A673 (cell line): ENCODE measurements at regions of chr11 and their contacts with region 1.

Region 1: GRCh38 chr11:102495161-102496042 is 35.1 kb downstream of the MMP7 start:
- DNase-seq: peak; percentile 87
- H3K4me3 ChIP-seq: no peak overlapping the region
- H3K27ac ChIP-seq: no peak overlapping the region
- H3K4me1 ChIP-seq: no peaks in the 10 kb centered on the region
- H3K27me3 ChIP-seq: no peaks in the 10 kb centered on the region
- CTCF ChIP-seq: peak; percentile 81

Region 2: DNA sequence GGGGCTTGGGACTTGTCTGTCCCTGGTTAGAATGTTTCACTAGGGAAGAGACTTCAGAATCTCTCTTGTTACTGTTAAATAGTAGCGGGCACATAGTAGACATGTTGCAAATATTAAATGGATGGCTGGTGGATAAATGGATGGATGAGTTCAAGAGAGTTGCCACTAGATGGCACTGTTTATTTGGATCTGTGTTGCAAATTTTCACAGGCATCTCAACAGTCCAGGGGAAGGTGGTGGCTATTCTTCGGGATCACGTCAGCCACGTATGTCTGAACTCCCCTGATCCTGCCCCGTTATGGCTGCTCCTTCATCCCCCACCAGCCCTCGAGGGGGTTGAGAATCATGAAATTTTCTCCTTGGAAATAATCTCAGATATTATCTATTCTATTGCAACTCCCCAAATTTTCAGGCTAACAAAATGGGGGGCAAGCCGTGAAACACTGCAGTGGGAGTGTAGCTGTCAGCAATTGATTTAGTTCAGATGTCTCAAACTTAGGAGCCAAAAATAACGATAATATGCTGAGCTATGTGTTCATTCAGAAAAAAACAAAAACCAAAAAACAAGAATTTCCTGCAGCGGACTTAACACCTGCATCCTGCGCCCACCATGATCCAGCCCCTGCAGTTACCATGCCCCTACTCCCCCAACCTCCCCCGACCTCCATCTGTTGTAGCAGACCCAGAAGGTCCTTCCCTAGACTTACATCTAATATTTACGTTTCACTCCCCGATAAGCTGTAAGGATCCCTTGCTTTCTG is 207.3 kb before region 1 on chr11:
- CTCF ChIA-PET with region 1: no interaction called
- POLR2A ChIA-PET with region 1: no interaction called
- intact Hi-C with region 1: loop called (anchors 2 kb)
- DNase-seq: peak; percentile 89
- H3K4me3 ChIP-seq: peak overlapping the region; percentile 22
- H3K27ac ChIP-seq: no peak overlapping the region
- H3K4me1 ChIP-seq: peaks cover 19% of the 10 kb centered on the region
- H3K27me3 ChIP-seq: no peaks in the 10 kb centered on the region
- CTCF ChIP-seq: peak; percentile 90

Region 3: GRCh38 chr11:102367364-102367763 is 128.0 kb before region 1 on chr11:
- CTCF ChIA-PET with region 1: interaction called, 3 read pairs
- POLR2A ChIA-PET with region 1: no interaction called
- intact Hi-C with region 1: loop called (anchors 1 kb)
- DNase-seq: peak; percentile 55
- H3K4me3 ChIP-seq: no peak overlapping the region
- H3K27ac ChIP-seq: no peak overlapping the region
- H3K4me1 ChIP-seq: no peaks in the 10 kb centered on the region
- H3K27me3 ChIP-seq: no peaks in the 10 kb centered on the region
- CTCF ChIP-seq: peak; percentile 44; the same call in 1 of the 2 replicates

Region 4: GRCh38 chr11:102614485-102614884 is 119.1 kb after region 1 on chr11:
- CTCF ChIA-PET with region 1: no interaction called
- POLR2A ChIA-PET with region 1: no interaction called
- intact Hi-C with region 1: loop called (anchors 5 kb)
- DNase-seq: peak; percentile 17
- H3K4me3 ChIP-seq: no peak overlapping the region
- H3K27ac ChIP-seq: no peak overlapping the region
- H3K4me1 ChIP-seq: no peaks in the 10 kb centered on the region
- H3K27me3 ChIP-seq: no peaks in the 10 kb centered on the region
- CTCF ChIP-seq: peak; percentile 29; the same call in 1 of the 2 replicates

Region 5: GRCh38 chr11:103051981-103052380 is 556.6 kb after region 1 on chr11:
- CTCF ChIA-PET with region 1: no interaction called
- POLR2A ChIA-PET with region 1: no interaction called
- intact Hi-C with region 1: no loop called
- DNase-seq: peak; percentile 78
- H3K4me3 ChIP-seq: no peak overlapping the region
- H3K27ac ChIP-seq: peak overlapping the region; percentile 11
- H3K4me1 ChIP-seq: peaks cover 24% of the 10 kb centered on the region
- H3K27me3 ChIP-seq: no peaks in the 10 kb centered on the region
- CTCF ChIP-seq: no peak